HCT116 (cell line): ENCODE measurements at regions of chr15 and their contacts with region 1.

Region 1: GRCh38 chr15:62742409-62743171 is 300.0 kb upstream of the TPM1 start:
- DNase-seq: peak; percentile 42
- ATAC-seq: peak; percentile 72; the same call in 1 of the 2 replicates
- H3K4me3 ChIP-seq: peak overlapping the region in 1 of 2 experiments; percentile 27; a peak in 1 of 4 replicates
- H3K27ac ChIP-seq: no peak overlapping the region
- H3K4me1 ChIP-seq: peaks cover 11 to 37% of the 10 kb centered on the region in 2 experiments
- H3K27me3 ChIP-seq: no peaks in the 10 kb centered on the region
- CTCF ChIP-seq: peak; percentile 66 to 89 (median 83); a peak in 5 of 6 replicates
- POLR2A ChIP-seq: no peak
- RAD21 ChIP-seq: peak; percentile 57; the same call in 1 of the 2 replicates

Region 2: DNA sequence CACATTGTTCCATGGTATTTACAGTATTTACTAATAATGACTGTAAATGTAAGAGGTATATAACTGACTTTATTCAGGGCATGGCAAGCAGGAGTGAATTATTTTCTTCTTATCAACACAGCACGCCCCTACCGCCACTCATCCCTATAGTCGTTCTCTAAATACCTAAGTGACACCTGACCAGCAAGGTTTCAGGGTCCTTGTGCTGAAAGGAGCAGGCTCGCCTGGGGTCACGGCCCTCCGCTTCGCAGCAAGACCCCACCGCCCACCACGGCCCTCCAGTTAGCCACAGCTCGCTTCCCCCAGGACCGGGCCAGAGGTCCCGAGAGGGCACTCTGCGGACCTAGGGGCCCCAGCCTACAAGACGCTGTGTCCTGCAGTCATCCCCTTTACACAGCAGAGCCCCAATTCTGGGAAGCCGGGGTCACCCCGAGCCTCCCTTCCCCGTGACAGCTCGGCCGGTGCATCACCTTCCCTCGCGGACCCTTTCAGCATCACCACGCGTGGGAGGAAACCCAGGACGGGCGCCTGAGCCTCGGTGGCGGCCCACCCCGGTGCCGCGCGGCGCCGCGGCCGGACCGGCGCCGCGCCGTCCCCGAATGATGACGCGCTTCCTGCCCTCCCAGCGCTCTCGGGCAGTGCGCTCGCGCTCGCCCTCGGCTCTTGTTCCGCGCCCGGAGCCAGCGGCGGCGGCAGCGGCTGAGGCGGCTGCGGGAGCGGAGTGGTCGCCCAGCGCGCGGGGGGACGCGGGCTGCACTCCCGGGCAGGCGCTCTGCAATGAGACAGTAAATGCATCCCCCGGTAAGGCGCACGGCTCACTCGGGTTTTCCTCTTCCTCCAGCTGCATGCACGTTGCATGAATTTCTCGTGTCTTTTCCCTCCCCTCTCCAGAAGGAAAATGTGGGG is 352.5 kb before region 1 on chr15:
- CTCF ChIA-PET with region 1: interaction called, 3 read pairs
- POLR2A ChIA-PET with region 1: no interaction called
- RAD21 ChIA-PET with region 1: no interaction called
- intact Hi-C with region 1: loop called (anchors 5 kb)
- DNase-seq: peak; percentile 39
- ATAC-seq: peak; percentile 86
- H3K4me3 ChIP-seq: peak within 1 kb of the TSS; percentile 92 to 96
- H3K27ac ChIP-seq: peak within 1 kb of the TSS; percentile 51
- H3K4me1 ChIP-seq: peaks cover 11 to 13% of the 10 kb centered on the region in 2 experiments; a peak in 3 of 4 replicates
- H3K27me3 ChIP-seq: no peaks in the 10 kb centered on the region
- CTCF ChIP-seq: no peak
- POLR2A ChIP-seq: peak; percentile 96
- RAD21 ChIP-seq: no peak

Region 3: GRCh38 chr15:62706317-62706716 is 36.3 kb before region 1 on chr15:
- CTCF ChIA-PET with region 1: interaction called, 17 read pairs
- POLR2A ChIA-PET with region 1: no interaction called
- RAD21 ChIA-PET with region 1: no interaction called
- intact Hi-C with region 1: no loop called
- DNase-seq: no peak
- ATAC-seq: no peak
- H3K4me3 ChIP-seq: no peak overlapping the region
- H3K27ac ChIP-seq: no peak overlapping the region
- H3K4me1 ChIP-seq: no peaks in the 10 kb centered on the region
- H3K27me3 ChIP-seq: no peaks in the 10 kb centered on the region
- CTCF ChIP-seq: 0 out of 6 replicates have a peak, but pooled peaks of 2 of the 3 experiments have one; percentile 6 to 14
- POLR2A ChIP-seq: no peak
- RAD21 ChIP-seq: 0 out of 2 replicates have a peak, but pooled peaks have one; percentile 5

Region 4: DNA sequence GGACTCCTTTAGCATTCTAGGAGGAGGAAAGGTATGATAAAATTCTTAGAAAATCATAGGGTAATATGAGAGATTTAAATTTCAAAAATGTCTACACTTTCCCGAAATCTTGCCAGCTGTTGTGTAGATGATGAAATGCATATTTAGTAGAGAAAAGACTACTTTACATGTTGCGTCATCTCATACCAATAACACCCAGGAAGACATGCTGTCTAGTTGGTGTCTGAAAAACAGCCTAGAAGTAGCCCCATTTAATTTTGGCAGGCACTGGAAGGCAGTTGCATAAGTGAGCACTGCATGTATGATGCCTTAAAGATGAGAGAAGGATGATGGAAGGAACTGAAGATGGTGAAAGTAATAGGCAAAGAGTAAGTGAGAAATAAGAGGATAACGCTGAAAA is 10.5 kb before region 1 on chr15:
- CTCF ChIA-PET with region 1: interaction called, 17 read pairs
- POLR2A ChIA-PET with region 1: no interaction called
- RAD21 ChIA-PET with region 1: no interaction called
- intact Hi-C with region 1: no loop called
- DNase-seq: no peak
- ATAC-seq: no peak
- H3K4me3 ChIP-seq: no peak overlapping the region
- H3K27ac ChIP-seq: no peak overlapping the region
- H3K4me1 ChIP-seq: no peaks in the 10 kb centered on the region
- H3K27me3 ChIP-seq: no peaks in the 10 kb centered on the region
- CTCF ChIP-seq: no peak
- POLR2A ChIP-seq: no peak
- RAD21 ChIP-seq: no peak

Region 5: DNA sequence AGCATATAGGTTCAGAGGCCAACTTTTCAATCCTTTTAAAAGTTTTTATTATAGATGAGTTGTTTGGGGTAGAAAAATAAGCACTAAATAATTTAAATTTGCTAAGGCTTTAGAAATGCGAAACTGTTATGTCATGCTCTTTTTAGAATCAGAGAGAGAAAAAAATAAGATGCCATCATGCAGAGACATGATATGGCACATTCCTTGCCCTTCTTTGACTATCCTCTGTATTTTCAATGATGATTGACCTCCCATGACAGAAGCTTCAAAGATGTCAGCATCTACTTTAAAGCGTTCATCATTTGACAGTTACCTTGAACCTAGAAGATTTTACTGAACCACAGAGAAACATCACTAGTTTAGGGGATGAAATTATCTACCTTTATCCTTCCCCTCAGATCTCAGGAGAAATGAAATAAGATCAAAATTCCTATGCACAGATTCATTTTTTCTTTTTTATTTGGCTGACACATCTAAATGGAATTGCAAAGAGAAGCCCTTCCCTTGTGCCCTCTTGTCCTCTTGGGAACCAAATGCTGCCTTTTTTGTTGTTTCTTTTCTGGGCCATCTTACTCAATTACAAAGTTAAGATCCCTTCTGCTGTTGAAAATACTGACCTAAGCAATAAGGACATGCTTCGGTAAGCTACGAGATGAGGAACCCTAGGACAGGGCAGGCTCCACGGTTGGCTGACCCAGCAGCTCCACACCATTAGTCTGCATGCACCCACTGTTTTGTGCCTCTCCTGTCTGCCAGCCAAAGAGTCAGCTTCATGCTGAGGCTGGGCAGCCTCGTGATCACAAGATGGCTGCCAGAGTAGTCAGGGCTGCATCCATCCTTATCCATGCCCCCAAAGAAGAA is 10.3 kb after region 1 on chr15:
- CTCF ChIA-PET with region 1: interaction called, 11 read pairs
- POLR2A ChIA-PET with region 1: no interaction called
- RAD21 ChIA-PET with region 1: no interaction called
- intact Hi-C with region 1: no loop called
- DNase-seq: no peak
- ATAC-seq: no peak
- H3K4me3 ChIP-seq: no peak overlapping the region
- H3K27ac ChIP-seq: no peak overlapping the region
- H3K4me1 ChIP-seq: peaks cover 0 to 5% of the 10 kb centered on the region in 2 experiments; a peak in 1 of 4 replicates
- H3K27me3 ChIP-seq: no peaks in the 10 kb centered on the region
- CTCF ChIP-seq: no peak
- POLR2A ChIP-seq: no peak
- RAD21 ChIP-seq: no peak